H1 (cell line): ENCODE measurements at regions of chr6 and their contacts with region 1.

Region 1: DNA sequence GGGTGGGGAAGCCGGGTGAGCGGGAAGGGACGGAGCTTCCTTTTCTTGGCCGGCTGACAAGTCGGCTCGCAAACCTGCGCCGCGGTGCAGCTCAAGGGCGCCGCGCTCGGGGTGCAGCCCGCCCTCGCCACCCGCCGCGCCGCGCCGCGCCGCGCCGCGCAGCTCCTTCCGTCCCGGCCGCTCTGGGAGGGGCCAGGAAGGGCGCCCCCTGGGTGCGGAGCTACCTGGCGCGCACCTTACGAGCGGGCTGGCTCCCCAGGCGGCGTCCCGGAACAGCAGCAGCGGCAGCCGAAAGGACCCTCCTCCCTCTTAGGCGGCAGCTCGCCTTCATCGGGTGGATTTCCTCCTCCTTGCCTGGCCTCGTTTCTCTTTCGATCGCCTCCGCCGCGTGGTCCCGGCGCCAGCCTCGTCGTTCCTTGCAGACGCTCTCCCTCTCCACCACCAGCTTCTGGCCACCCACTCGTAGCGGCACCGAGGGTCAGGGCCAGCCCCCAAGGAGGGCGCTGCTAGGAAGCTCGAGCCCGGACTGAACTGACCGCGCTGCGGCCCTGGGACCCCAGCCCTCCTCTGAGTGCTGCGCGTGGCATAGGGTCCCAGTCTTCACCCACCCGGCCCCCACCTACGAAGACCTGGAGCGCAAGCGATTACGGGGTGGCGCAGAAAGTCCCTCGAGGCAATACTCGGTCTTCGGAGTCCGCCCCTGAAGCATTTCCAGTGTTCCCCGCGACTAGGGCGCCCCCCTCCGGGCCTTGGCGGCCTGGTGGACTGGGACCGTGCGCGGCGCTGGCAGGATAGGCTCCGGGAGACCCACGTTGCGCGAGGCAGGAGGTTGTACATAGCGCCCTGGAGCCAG is at the start of gene MAP3K5:
- DNase-seq: peak in 1 of 2 experiments; percentile 93
- H3K4me3 ChIP-seq: peak within 1 kb of the TSS; percentile 42 to 78 (median 70)
- H3K27ac ChIP-seq: no peak within 1 kb of the TSS
- H3K4me1 ChIP-seq: 0 out of 7 replicates have a peak, but pooled peaks cover 0 to 9% (median 1%) of the 10 kb centered on the region in 4 experiments
- H3K27me3 ChIP-seq: peaks cover 8 to 31% (median 19%) of the 10 kb centered on the region in 4 experiments; a peak in 6 of 7 replicates
- CTCF ChIP-seq: peak; percentile 80 to 85 (median 82)
- EP300 ChIP-seq: no peak
- POLR2A ChIP-seq: no peak
- RAD21 ChIP-seq: peak; percentile 87 to 94
- total RNA-seq, gene MAP3K5: 2.4 and 2.6 TPM in 2 replicates

Region 2: DNA sequence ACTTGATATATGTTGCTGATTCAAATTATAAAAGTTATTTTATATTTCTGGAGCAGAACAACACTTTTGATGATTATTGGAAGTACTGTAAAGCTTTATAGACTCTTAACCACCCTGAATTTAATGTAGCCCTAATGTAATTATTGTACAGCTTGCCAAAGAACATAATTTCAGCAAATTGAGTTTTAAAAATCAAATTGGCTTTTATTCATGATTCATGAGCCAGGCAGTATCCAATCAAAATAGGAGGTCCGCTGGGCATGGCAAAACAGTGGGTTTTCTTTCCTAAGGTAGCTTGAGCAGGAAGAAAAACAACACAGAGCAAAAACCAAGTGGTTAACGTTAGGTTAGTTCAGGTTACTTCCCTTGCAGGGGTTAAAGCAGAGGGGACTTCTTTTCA is 177.6 kb before region 1 on chr6:
- CTCF ChIA-PET with region 1: interaction called, 10 read pairs
- POLR2A ChIA-PET with region 1: no interaction called
- DNase-seq: no peak
- H3K4me3 ChIP-seq: no peak overlapping the region
- H3K27ac ChIP-seq: no peak overlapping the region
- H3K4me1 ChIP-seq: peaks cover 0 to 10% (median 1%) of the 10 kb centered on the region in 4 experiments; a peak in 4 of 7 replicates
- H3K27me3 ChIP-seq: no peaks in the 10 kb centered on the region
- CTCF ChIP-seq: no peak
- EP300 ChIP-seq: no peak
- POLR2A ChIP-seq: no peak
- RAD21 ChIP-seq: no peak

Region 3: GRCh38 chr6:136737871-136738691 is 54.6 kb before region 1 on chr6:
- CTCF ChIA-PET with region 1: interaction called, 13 read pairs
- POLR2A ChIA-PET with region 1: no interaction called
- DNase-seq: no peak
- H3K4me3 ChIP-seq: no peak overlapping the region
- H3K27ac ChIP-seq: no peak overlapping the region
- H3K4me1 ChIP-seq: no peaks in the 10 kb centered on the region
- H3K27me3 ChIP-seq: no peaks in the 10 kb centered on the region
- CTCF ChIP-seq: no peak
- EP300 ChIP-seq: no peak
- POLR2A ChIP-seq: no peak
- RAD21 ChIP-seq: no peak

Region 4: DNA sequence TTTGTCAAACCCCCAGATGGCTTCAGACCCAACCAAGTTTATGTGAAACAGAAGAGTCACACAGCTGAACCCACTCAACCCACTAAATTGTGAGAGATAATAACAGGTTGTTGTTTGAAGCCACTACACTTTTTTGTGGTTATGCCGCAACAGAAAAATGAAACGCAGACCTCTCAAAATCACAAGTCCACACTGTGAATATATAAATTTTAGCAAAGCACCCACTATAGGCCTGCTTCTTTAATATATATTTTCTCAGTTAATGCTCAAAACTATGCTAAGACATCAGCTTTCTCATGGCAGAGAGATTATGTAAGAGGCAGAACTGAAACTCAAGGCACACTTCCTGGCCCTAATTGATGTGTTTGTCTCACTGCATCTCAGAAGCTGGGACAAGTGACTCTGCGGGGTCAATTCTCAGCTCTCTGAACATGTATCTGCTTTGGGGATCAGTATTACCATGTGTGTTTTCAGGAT is 28.1 kb before region 1 on chr6:
- CTCF ChIA-PET with region 1: interaction called, 11 read pairs
- POLR2A ChIA-PET with region 1: interaction called, 4 read pairs
- DNase-seq: no peak
- H3K4me3 ChIP-seq: no peak overlapping the region
- H3K27ac ChIP-seq: no peak overlapping the region
- H3K4me1 ChIP-seq: no peaks in the 10 kb centered on the region
- H3K27me3 ChIP-seq: no peaks in the 10 kb centered on the region
- CTCF ChIP-seq: no peak
- EP300 ChIP-seq: no peak
- POLR2A ChIP-seq: no peak
- RAD21 ChIP-seq: no peak